Calu3 (cell line): ENCODE measurements at regions of chr3 and their contacts with region 1.

Region 1: DNA sequence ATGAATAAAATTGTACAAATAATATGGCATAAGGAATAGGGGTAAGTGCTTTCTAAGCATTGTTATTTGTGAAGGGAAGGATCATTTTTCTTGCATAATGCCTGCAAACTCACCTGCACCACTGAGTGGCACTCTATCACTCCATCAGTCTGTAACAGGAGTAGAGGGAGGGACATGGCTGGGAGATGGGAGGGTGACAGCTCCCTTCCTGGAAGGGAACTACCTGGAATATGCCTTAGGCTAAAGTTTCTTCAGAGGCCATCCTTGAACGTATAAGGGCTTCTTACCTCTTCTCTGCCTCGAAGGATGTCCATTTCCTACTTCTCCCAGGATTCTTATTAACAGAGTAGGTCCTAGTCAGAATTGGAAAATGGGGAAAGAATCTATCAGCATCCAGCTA is 3.0 kb downstream of the NAALADL2 start:
- DNase-seq: peak; percentile 80
- H3K4me3 Mint-ChIP-seq: peak overlapping the region; percentile 83
- H3K27ac Mint-ChIP-seq: peak overlapping the region; percentile 71
- H3K4me1 Mint-ChIP-seq: peaks cover 53% of the 10 kb centered on the region
- H3K27me3 Mint-ChIP-seq: no peaks in the 10 kb centered on the region
- CTCF ChIP-seq: peak; percentile 81

Region 2: DNA sequence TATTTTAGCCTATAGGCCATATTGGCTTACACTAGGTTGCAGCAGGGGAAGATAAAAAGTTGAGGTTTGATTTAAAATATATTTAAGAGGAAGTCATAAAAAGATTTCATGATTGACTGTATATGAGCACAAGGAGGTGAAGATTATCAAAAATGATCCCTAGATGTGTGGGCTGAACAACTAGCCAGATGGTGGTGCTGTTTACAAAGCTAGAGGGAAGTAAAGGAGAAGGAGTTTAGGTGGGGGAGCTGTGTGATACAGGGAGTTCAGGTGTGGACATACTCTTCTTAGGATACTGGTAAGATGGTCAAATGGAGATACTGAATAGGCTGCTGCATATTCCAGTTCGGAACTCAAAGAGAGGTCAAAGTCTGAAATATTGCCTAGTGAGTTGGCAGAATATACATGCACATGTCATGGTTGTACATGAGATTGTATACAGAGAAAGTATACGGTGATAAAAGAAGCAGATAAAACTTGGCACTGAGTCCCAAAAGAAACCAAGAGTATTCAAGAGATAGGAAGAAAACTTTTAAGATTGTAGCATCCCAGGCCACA is 736.8 kb before region 1 on chr3:
- CTCF ChIA-PET with region 1: no interaction called
- intact Hi-C with region 1: loop called (anchors 1 kb)
- DNase-seq: peak; percentile 45
- H3K4me3 Mint-ChIP-seq: no peak overlapping the region
- H3K27ac Mint-ChIP-seq: no peak overlapping the region
- H3K4me1 Mint-ChIP-seq: peaks cover 25% of the 10 kb centered on the region
- H3K27me3 Mint-ChIP-seq: no peaks in the 10 kb centered on the region
- CTCF ChIP-seq: peak; percentile 80

Region 3: DNA sequence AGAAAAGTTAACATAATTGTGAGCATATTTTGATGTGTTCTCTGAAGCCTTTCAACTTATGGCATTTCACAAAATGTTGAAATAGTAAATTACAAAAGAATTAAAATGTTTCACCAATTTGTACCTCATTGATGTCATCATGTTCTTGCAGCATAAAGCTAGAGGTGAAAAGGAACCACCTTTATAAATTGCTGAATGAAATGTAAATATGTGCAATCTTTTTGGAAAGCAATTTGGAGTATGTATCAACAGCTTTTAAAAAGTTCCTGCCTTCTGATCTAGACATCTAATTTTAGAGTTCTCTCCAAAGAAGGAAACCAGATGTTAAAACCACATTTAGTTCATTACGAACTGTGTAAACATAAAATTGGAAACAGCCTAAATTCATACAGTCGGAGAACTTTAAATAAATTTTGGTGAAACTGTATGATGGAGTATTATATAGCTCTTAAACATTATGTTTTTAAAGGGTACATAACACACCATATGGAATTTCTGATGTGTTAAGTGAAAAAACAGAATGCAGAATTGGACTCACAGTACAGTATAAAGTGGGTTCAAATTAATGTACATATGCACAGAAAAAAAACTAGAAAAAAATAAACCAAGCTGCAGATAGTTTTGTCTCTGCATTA is 314.2 kb before region 1 on chr3:
- CTCF ChIA-PET with region 1: no interaction called
- intact Hi-C with region 1: loop called (anchors 5 kb)
- DNase-seq: no peak
- H3K4me3 Mint-ChIP-seq: no peak overlapping the region
- H3K27ac Mint-ChIP-seq: no peak overlapping the region
- H3K4me1 Mint-ChIP-seq: peaks cover 17% of the 10 kb centered on the region
- H3K27me3 Mint-ChIP-seq: no peaks in the 10 kb centered on the region
- CTCF ChIP-seq: no peak

Region 4: DNA sequence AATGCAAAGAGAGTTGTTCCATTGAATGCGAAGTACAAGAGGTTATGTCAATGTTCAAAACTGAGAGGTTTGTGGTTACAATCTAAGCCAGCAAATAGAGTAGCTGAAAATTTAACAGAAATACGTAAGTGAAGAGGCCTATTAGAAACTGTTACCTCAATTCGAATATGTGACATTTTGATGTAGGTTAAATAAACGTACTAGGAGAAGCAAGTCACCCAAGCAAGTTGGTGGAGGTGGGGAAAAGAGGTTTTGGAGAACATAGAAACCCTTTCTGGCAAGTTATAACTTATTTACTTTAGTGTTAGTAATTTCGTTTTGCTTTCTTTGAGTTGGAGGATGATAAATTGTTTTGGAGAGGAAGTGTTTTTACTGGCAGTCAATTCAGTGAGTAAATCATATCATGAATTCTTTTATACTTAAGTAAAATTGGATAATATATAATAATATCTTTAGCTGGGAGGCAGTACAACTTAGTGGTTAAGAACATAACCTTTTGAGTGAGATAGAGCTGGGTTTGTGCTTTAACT is 94.2 kb before region 1 on chr3:
- CTCF ChIA-PET with region 1: no interaction called
- intact Hi-C with region 1: no loop called
- DNase-seq: no peak
- H3K4me3 Mint-ChIP-seq: no peak overlapping the region
- H3K27ac Mint-ChIP-seq: peak overlapping the region; percentile 63
- H3K4me1 Mint-ChIP-seq: peaks cover 10% of the 10 kb centered on the region
- H3K27me3 Mint-ChIP-seq: no peaks in the 10 kb centered on the region
- CTCF ChIP-seq: no peak

Region 5: DNA sequence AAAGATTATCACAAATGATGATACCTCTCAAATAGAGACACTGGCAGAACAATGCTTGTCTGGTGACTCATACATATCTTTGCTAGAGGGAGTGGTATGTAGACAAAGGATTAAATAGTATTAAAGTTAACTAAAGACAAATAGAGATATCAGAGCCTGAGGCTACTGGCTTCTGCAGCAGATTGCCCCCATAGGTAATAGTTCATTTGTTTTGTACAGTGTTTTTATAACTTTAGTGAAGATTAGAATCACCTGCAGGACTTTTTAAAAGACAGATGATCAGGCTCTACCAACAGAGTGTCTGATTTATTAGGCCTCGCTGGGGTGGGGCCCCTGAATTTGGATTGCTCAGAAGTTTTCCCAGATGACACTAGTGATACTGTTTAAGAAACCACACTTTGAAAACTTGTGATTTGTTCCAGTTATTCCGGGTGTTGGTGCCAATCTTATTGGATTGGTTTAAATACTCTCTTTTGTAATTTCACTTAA is 93.4 kb after region 1 on chr3:
- CTCF ChIA-PET with region 1: interaction called, 3 read pairs
- intact Hi-C with region 1: loop called (anchors 1 kb)
- DNase-seq: no peak
- H3K4me3 Mint-ChIP-seq: no peak overlapping the region
- H3K27ac Mint-ChIP-seq: peak overlapping the region; percentile 89
- H3K4me1 Mint-ChIP-seq: peaks cover 86% of the 10 kb centered on the region
- H3K27me3 Mint-ChIP-seq: no peaks in the 10 kb centered on the region
- CTCF ChIP-seq: no peak

Region 6: GRCh38 chr3:175149675-175150074 is 287.5 kb after region 1 on chr3:
- CTCF ChIA-PET with region 1: interaction called, 6 read pairs
- intact Hi-C with region 1: loop called (anchors 1 kb)
- DNase-seq: peak; percentile 92
- H3K4me3 Mint-ChIP-seq: peak overlapping the region; percentile 48
- H3K27ac Mint-ChIP-seq: peak overlapping the region; percentile 94
- H3K4me1 Mint-ChIP-seq: peaks cover 67% of the 10 kb centered on the region
- H3K27me3 Mint-ChIP-seq: no peaks in the 10 kb centered on the region
- CTCF ChIP-seq: no peak

Region 7: DNA sequence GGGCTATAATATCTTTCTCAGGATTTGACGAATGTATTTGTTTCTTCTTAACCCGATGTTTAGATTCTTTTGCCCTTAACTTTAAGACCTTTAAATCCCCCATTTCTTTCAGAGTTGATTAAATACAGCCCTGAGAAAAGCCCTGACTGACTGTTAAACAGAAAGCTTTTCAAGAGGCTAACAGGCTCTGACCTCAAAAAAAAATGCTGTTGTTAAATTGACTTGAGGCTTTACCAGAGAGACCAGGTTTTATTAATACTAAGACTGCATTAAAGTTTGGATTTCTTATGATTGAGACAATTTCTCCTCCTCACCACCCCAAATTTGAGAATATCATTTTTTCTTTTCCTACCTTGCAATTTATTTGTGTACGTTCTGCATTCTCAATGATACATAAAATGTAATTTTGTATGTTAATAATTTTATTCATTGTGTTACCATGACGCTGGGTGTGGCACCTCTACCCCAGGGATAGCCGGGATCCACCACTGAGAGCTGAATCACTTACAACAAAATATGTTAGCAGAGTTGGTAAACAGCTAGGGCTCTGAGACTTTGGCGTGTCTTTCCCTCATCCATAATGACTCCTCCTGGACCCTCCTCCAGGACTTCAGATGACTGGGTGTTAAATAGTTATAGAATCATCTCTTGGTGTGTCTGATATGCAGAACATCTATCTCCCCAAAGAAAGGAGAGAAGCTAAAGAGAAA is 750.5 kb after region 1 on chr3:
- CTCF ChIA-PET with region 1: no interaction called
- intact Hi-C with region 1: loop called (anchors 5 kb)
- DNase-seq: no peak
- H3K4me3 Mint-ChIP-seq: no peak overlapping the region
- H3K27ac Mint-ChIP-seq: peak overlapping the region; percentile 83
- H3K4me1 Mint-ChIP-seq: peaks cover 29% of the 10 kb centered on the region
- H3K27me3 Mint-ChIP-seq: no peaks in the 10 kb centered on the region
- CTCF ChIP-seq: no peak

Region 8: DNA sequence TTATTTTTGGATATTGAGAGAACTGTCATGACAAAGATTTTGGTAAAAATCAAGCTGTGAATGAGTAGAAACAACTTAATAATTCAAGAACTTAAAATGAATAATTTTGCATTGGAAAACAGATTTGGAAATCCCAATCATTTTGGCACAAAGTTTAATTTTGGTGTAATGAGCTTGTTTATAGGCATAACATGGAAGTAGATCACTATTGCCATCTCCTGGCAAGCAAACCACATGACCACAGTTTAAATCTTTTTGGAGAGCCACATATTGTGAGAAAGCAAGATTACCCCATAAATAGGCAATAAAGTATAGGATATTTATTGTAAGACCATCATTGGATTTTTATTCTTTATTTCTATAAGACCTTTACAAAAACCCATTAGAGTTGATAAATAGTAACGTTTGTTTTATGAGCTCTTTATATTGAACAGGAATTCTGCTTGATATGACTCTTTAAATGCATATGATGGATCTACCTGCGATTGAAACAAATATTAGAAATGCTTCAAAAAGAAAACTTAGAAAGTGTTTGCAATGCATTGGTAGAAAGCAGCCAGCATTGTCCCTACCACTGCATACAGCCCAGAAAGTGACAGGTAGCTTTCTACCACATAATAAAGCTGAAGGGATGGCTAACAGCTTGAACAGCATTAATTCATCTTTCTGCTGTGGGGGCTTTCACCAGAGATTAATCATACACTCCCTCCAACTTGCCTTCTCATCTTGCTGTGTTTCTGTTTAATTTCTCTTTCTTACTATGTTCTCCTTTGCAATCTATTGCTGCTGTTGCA is 1568.3 kb after region 1 on chr3:
- CTCF ChIA-PET with region 1: interaction called, 15 read pairs
- intact Hi-C with region 1: loop called (anchors 2 kb)
- DNase-seq: peak; percentile 24
- H3K4me3 Mint-ChIP-seq: no peak overlapping the region
- H3K27ac Mint-ChIP-seq: no peak overlapping the region
- H3K4me1 Mint-ChIP-seq: peaks cover 10% of the 10 kb centered on the region
- H3K27me3 Mint-ChIP-seq: no peaks in the 10 kb centered on the region
- CTCF ChIP-seq: peak; percentile 60